Psoas muscle (tissue), 8 donors: ENCODE measurements at regions of chr4 and their contacts with region 1.

Region 1: DNA sequence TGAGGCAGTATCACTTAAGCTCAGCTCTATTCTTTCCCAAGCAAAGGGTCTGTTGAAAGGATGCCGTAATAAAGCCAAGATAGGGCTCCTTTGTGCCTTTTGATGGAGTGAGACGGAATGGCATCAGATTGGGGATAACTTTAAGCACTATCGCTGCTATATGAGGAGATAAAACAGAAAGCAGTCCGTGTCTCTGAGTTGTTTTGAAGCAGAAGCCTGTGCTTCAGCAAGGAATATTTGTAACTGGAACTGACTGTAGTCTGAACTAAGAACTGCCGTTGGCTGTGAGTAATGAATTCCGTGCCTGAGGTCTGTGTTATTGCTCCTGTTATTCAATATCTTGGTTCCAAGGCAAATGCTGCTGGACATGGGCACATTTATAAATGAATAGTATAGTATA is 297.4 kb downstream of the ANKRD50 start:
- DNase-seq: no peak
- ATAC-seq: no peak
- H3K4me3 ChIP-seq: no peak overlapping the region
- H3K27ac ChIP-seq: no peak overlapping the region
- H3K4me1 ChIP-seq: no peaks in the 10 kb centered on the region
- H3K27me3 ChIP-seq: no peaks in the 10 kb centered on the region
- CTCF ChIP-seq: no peak

Region 2: DNA sequence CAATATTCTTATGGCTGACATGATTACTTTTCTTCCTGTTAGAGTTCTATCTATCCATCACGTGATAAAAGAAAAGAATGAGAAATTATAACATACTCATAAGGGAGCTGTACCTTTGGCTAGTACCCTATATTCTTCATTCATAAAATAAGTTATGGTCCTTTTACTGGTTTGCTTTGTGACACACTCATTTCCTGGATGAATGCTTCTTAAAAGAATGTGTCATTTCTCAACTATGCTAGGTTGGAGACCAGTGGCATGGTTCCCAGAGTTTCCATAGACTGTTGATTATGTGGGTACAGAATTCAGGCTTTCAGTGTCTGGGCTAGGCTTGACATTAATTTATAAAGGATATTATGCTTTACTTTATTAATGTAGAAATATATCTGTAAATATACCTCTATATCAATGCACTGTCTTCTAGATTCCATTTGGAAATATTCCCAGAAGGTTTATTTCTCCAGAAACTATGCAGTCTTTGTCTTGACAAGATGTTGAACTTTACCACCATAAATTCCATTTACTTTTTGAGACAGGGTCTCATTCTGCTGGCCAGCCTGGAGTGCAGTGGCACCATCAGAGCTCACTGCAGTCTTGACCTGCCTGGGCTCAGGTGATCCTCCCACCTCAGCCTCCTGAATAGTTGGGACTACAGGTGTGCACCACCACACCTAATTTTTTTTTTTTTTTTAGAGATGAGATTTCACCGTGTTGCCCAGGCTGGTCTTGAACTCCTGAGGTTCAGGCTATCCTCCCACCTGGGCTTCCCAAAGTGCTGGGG is 1516.6 kb before region 1 on chr4:
- intact Hi-C with region 1: no loop called
- DNase-seq: no peak
- ATAC-seq: no peak
- H3K4me3 ChIP-seq: no peak overlapping the region
- H3K27ac ChIP-seq: no peak overlapping the region
- H3K4me1 ChIP-seq: no peaks in the 10 kb centered on the region
- H3K27me3 ChIP-seq: no peaks in the 10 kb centered on the region
- CTCF ChIP-seq: no peak

Region 3: DNA sequence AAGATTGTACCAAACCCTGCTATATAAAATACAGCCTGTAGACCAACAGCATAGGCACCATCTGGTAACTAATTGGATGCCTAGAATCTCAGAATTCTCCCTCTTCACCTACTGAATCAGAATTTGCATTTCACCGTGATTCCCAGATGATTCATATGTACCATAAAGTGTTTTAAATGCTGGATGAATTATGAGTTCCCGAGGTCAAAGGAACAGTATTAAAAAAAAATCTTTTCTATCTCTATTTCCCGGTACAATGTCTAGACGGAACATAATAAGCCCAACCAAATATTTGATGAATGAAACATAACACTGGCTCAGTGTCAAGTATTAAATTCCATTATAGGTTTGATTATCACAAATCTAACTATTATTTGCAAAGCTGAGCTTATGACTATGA is 17.4 kb after region 1 on chr4:
- intact Hi-C with region 1: loop called in 1 of 2 experiments (anchors 1 kb)
- DNase-seq: no peak
- ATAC-seq: no peak
- H3K4me3 ChIP-seq: no peak overlapping the region
- H3K27ac ChIP-seq: no peak overlapping the region
- H3K4me1 ChIP-seq: peaks cover 3% of the 10 kb centered on the region
- H3K27me3 ChIP-seq: no peaks in the 10 kb centered on the region
- CTCF ChIP-seq: no peak